ENCODE measurements at regions of chr3 and their contacts with region 1.

Region 1: DNA sequence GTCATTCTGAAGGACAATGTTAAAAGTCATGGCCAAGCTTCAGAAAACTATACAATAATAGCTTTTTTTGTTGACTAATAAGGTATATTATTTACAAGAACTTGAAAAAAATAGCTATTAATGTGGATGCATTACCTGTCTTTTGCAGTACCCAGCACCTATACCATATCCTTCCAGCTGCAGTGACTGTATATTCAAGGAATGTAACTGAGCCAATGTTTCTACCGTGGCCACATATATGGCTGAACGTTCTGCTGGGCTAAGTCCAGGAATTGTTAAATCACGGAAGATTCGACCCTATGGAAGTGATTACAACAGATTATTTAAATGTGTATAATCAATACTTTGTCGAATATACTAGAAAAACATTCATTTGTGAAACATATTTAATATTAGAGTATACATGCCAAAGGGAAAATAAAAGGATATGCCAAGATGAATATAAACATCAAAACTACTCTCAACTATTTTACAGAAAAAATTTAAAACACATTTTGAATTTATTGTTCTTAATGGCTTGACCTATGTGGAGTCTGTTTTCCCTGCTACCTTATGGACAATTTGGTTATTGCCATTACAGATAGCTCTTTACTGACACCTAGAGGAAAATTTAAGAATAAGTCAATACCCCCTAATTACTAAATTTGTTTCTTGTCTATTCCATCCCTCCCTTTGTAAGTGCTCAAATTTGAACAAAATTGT is 17.6 kb downstream of the ACAD11 start:
- DNase-seq: no peak
- ATAC-seq: no peak
- H3K4me3 Mint-ChIP-seq: no peak overlapping the region
- H3K27ac Mint-ChIP-seq: no peak overlapping the region
- H3K4me1 Mint-ChIP-seq: peaks cover 3% of the 10 kb centered on the region
- H3K27me3 Mint-ChIP-seq: no peaks in the 10 kb centered on the region
- CTCF ChIP-seq: peak; percentile 97

Region 2: DNA sequence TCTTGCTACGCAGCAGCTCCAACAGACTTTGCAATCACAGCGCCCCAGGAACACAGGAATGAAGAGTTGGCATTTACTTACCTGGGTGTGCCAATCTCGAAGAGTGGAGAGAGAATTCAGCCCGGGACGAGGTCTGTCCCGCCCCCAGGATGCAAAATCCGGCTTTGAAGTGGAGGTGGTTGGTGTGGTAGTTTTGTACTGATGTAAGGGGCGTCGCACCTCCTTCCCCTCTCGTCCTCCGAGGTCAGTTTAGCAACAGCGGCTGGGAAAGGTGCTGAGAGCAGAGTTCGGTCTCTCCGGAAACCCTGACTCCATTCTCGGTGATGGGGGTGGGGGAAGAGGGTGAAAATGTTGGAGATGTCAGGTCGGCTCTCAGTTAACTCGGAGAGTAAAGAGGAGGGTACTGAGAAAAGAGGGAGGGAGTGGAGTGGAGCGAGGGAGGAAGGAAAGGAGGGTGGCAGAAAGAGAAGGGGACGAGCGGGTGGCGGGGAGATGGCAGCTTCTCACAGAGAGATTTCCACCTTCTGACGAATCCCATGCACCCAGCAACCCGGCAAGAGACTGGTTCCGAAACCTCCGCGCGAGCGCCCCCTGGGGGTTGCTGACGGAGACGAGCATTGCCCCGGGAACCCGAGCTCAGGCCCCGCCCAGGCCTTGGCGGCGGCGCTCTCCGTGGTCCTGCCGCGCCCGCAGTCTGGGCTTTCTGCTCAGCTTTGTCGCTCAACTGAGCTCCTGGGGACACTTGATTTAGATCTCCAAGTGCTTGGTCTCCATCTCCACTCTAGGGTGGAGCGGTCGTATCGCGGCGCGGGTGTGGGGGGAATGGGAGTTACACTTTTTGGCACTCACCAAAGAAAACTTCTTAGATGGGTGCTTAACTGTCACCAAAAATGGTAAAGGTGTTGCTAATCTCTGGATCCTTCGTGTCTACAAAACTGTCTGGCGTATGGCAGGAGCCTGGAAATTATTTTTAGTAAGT is 607.2 kb before region 1 on chr3 and contains the start of gene CPNE4:
- CTCF ChIA-PET with region 1: no interaction called
- POLR2A ChIA-PET with region 1: no interaction called
- intact Hi-C with region 1: loop called (anchors 10 kb)
- DNase-seq: no peak
- ATAC-seq: no peak
- H3K4me3 Mint-ChIP-seq: no peak within 1 kb of the TSS
- H3K27ac Mint-ChIP-seq: no peak within 1 kb of the TSS
- H3K4me1 Mint-ChIP-seq: peaks cover 9% of the 10 kb centered on the region
- H3K27me3 Mint-ChIP-seq: peaks cover 65% of the 10 kb centered on the region
- CTCF ChIP-seq: no peak
- total RNA-seq, gene CPNE4: not detected in 2 replicates

Region 3: GRCh38 chr3:132180337-132180791 is 461.6 kb before region 1 on chr3:
- CTCF ChIA-PET with region 1: no interaction called
- POLR2A ChIA-PET with region 1: no interaction called
- intact Hi-C with region 1: no loop called
- DNase-seq: no peak
- ATAC-seq: peak; percentile 25
- H3K4me3 Mint-ChIP-seq: no peak overlapping the region
- H3K27ac Mint-ChIP-seq: no peak overlapping the region
- H3K4me1 Mint-ChIP-seq: no peaks in the 10 kb centered on the region
- H3K27me3 Mint-ChIP-seq: peaks cover 15% of the 10 kb centered on the region
- CTCF ChIP-seq: no peak

Region 4: DNA sequence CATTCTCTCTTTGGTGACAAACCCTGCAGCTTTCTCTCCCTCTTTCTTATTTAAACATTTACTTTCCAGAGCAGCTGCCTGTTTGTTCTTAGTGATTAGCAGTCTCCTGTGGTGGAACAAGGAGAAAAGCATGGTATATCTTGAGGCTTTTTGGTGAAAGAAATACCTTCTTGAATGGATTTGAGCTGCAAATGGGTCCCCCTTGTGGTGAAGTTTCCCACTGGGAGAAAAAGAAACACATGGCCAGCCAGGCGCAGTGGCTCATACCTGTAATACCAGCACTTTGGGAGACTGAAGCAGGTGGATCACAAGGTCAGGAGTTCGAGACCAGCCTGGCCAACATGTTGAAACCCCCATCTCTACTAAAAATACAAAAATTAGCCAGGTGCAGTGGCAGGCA is 373.0 kb before region 1 on chr3:
- CTCF ChIA-PET with region 1: no interaction called
- POLR2A ChIA-PET with region 1: no interaction called
- intact Hi-C with region 1: loop called (anchors 10 kb)
- DNase-seq: no peak
- ATAC-seq: no peak
- H3K4me3 Mint-ChIP-seq: no peak overlapping the region
- H3K27ac Mint-ChIP-seq: no peak overlapping the region
- H3K4me1 Mint-ChIP-seq: no peaks in the 10 kb centered on the region
- H3K27me3 Mint-ChIP-seq: peaks cover 4% of the 10 kb centered on the region
- CTCF ChIP-seq: no peak

Region 5: GRCh38 chr3:132535575-132536441 is 106.2 kb before region 1 on chr3:
- CTCF ChIA-PET with region 1: interaction called, 61 read pairs
- POLR2A ChIA-PET with region 1: no interaction called
- intact Hi-C with region 1: loop called (anchors 1 kb)
- DNase-seq: peak; percentile 15
- ATAC-seq: no peak
- H3K4me3 Mint-ChIP-seq: no peak overlapping the region
- H3K27ac Mint-ChIP-seq: no peak overlapping the region
- H3K4me1 Mint-ChIP-seq: no peaks in the 10 kb centered on the region
- H3K27me3 Mint-ChIP-seq: no peaks in the 10 kb centered on the region
- CTCF ChIP-seq: peak; percentile 78

Measured in activated B cell treated with CpG ODN at 0.5 μM for 24 hours (primary cell).